Heart right ventricle (tissue), 16 donors: ENCODE measurements at regions of chr9 and their contacts with region 1.

Region 1: DNA sequence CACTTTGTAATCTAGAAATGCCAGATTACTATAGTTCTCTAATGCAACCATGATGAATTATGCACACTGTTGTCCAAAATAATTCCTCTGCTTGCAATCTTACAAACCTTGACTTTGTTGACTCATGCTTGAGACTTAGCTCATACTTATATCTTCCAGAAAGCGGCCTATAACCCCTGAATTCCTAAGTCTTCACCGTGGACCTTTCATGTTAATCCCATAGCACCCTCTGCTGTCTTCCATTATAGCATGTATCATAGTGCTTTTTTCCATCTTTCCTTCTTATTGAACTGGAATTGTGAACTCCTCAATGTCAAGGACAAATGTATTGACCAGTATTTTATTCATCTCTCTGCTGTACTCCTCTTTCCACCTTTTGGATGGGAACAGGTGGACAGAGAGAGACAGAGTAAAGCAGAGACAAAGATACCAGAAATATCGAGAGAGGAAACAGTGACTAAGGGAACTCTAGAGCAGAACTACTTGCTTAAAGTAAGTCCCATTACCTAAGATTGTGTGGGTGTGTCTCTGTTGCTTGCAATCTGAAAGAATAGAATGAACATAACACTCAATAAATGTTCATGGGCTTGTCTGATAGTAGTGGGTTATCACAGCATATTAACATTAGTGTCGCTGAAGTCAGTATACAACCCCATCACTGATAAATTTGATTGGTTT is 110.1 kb downstream of the LURAP1L start:
- DNase-seq: no peak
- ATAC-seq: peak in 6 of 8 donors; percentile 52 to 72 (median 59)
- H3K4me3 ChIP-seq: no peak overlapping the region
- H3K27ac ChIP-seq: no peak overlapping the region
- H3K4me1 ChIP-seq: peaks cover 0 to 29% (median 5%) of the 10 kb centered on the region in 9 donors
- H3K27me3 ChIP-seq: no peaks in the 10 kb centered on the region
- CTCF ChIP-seq: peak; percentile 31 to 76 (median 60)

Region 2: DNA sequence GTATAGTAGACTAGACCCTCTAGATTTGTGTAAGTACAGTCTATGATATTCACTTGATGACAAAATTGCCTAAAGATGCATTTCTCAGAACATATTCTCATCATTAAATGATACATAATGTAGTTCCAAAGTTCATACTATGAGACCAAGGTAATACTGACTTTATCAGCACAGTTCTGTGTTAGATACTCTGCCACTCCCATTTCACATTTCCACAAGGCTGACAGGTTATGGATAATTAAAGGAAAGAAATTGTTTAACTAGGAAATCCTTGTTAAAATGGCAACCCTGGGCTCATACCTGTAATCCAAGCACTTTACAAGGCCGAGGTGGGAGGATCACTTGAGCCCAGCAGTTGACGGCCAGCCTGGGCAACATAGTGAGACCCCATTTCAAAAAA is 158.1 kb before region 1 on chr9:
- intact Hi-C with region 1: loop called (anchors 2 to 10 kb)
- DNase-seq: no peak
- ATAC-seq: no peak
- H3K4me3 ChIP-seq: no peak overlapping the region
- H3K27ac ChIP-seq: no peak overlapping the region
- H3K4me1 ChIP-seq: no peaks in the 10 kb centered on the region
- H3K27me3 ChIP-seq: no peaks in the 10 kb centered on the region
- CTCF ChIP-seq: no peak

Region 3: GRCh38 chr9:12739014-12739652 is 145.7 kb before region 1 on chr9:
- intact Hi-C with region 1: no loop called
- DNase-seq: no peak
- ATAC-seq: no peak
- H3K4me3 ChIP-seq: no peak overlapping the region
- H3K27ac ChIP-seq: no peak overlapping the region
- H3K4me1 ChIP-seq: no peaks in the 10 kb centered on the region
- H3K27me3 ChIP-seq: no peaks in the 10 kb centered on the region
- CTCF ChIP-seq: no peak

Region 4: DNA sequence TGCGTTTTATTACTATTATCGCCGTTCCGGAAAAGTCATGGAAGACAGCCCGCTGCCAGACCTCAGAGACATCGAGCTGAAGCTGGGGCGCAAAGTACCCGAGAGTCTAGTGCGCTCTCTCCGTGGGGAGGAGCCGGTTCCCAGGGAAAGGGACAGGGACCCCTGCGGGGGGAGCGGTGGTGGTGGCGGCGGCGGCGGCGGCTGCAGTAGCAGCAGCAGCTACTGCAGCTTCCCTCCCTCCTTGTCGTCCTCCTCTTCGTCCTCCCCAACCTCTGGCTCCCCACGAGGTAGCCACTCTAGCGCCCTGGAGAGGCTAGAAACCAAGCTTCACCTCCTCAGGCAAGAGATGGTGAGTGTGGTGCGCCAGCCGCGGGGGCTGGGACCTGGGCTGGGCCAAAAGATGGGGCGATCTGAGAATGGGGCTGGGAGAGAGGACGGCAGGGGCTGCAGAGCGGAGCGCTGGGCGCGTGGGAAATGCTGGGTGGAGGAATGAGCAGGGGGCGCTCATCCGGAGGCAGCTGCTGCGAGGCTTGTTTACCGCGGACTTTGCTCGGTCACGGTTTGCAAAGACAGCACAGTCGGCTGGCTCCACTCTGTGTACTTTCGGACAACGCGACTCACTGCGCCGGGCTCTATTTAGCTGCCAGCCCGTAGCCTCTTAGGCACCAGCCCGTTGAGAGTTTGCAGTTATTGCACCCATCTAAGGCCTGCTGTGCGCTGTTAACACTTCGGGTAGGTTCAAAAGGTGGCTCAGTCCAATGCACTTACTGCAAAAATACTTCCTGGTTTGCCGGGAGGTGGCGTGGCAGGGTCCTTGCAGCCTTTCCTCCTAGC is 109.0 kb before region 1 on chr9:
- intact Hi-C with region 1: loop called in 3 of 10 experiments (anchors 2 to 5 kb)
- DNase-seq: peak; percentile 5 to 45
- ATAC-seq: peak; percentile 61 to 97 (median 94)
- H3K4me3 ChIP-seq: peak overlapping the region; percentile 70 to 91 (median 83)
- H3K27ac ChIP-seq: peak overlapping the region; percentile 84 to 93 (median 86)
- H3K4me1 ChIP-seq: peaks cover 0 to 36% (median 17%) of the 10 kb centered on the region in 9 donors
- H3K27me3 ChIP-seq: peaks cover 0 to 19% (median 0%) of the 10 kb centered on the region in 7 donors
- CTCF ChIP-seq: peak in 8 of 9 donors; percentile 24 to 70 (median 55)

Region 5: DNA sequence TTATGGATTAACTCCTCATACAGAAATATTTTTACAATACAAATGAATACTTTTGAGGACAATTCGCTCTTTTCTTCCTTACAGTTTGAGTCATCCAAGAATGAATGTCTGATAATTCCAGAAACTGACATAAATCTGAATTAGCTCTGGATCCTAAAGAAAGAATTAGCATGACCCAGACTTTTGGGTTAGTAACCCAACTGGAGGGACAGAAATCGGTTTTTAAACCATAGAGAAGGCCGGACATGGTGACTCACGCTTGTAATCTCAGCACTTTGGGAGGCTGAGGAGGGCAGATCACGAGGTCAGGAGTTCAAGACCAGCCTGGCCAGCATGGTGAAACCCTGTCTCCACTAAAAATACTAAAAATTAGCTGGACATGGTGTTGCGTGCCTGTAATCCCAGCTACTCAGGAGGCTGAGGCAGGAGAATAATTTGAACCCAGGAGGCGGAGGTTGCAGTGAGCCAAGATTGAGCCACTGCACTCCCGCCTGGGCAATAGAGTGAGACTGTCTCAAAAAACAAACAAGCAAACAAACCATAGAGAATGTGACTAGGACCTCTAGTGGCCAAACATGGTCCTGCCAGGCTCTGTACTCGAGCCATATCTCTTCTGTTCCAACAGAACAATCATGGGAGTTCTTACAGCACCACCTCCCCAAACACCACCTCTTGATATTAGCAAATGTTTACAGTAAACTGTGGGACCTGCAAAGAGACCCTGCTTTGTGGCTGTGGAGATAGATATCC is 65.3 kb before region 1 on chr9:
- intact Hi-C with region 1: loop called in 2 of 10 experiments (anchors 5 to 10 kb)
- DNase-seq: no peak
- ATAC-seq: no peak
- H3K4me3 ChIP-seq: no peak overlapping the region
- H3K27ac ChIP-seq: peak overlapping the region in 2 of 10 donors; percentile 2 to 56
- H3K4me1 ChIP-seq: peaks cover 0 to 25% (median 14%) of the 10 kb centered on the region in 9 donors
- H3K27me3 ChIP-seq: no peaks in the 10 kb centered on the region
- CTCF ChIP-seq: peak; percentile 15 to 48 (median 30)

Region 6: GRCh38 chr9:12838546-12838945 is 46.3 kb before region 1 on chr9:
- intact Hi-C with region 1: loop called in 1 of 10 experiments (anchors 10 kb)
- DNase-seq: no peak
- ATAC-seq: no peak
- H3K4me3 ChIP-seq: no peak overlapping the region
- H3K27ac ChIP-seq: no peak overlapping the region
- H3K4me1 ChIP-seq: no peaks in the 10 kb centered on the region
- H3K27me3 ChIP-seq: no peaks in the 10 kb centered on the region
- CTCF ChIP-seq: no peak

Region 7: DNA sequence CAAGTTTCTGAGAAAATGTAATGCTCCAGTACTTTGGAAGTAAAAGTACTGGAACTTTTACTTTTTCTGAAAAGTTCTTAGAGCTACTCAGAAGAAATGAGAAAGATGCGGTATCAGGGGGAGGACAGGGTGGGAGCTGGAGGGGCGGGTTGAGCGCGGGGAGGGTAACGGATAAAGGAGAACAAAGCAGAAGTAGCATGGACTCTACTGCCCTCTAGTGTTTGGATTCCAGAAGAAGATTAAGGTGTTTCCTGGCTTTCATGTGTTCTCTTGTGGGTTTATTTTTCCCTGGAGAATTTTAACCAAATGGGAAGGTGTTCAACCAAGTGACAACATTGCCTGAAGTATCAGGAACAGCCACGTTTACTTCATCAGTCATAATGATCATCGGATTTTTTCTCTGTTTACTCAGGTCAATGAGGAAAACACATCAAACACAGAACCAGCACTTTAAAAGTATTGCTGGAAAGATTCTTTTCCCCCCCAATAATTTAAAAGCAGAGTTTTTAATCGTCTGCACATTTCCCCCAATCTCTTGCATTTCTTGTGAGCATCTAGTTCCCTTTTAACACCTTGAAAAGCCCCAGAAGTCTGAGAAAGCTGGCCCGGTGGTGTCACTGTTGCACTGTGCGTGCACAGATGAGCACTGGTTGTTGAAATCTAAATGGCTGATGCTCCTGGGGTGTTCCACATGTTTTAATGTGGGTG is 204.0 kb after region 1 on chr9:
- intact Hi-C with region 1: loop called in 2 of 10 experiments (anchors 5 to 10 kb)
- DNase-seq: peak in 1 of 2 donors; percentile 13
- ATAC-seq: peak in 5 of 8 donors; percentile 51 to 73 (median 65)
- H3K4me3 ChIP-seq: peak overlapping the region in 1 of 10 donors; percentile 16
- H3K27ac ChIP-seq: no peak overlapping the region
- H3K4me1 ChIP-seq: peaks cover 0 to 7% (median 0%) of the 10 kb centered on the region in 9 donors
- H3K27me3 ChIP-seq: no peaks in the 10 kb centered on the region
- CTCF ChIP-seq: peak; percentile 59 to 84 (median 76)